CD14-positive monocyte (primary cell): ENCODE measurements at regions of chr17 and their contacts with region 1.

Region 1: DNA sequence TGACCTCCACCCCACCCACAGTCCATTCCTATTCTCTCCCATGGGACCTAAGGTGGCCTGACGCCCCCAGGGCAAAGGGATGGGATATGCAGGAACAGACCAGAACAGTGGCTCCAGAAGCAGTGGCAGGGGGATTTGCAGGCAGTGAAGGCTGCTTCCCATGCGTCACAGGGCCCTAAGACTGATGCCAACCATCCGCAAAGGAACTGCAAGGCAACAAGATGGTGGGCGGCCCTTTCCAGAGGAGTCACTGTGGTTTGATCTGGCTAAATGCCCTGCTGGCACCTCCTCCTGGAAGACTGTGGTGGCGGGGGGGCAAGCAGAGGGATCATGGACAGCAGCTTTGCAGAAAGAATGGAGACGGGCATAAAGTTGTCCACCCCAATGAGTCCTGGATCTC is 4.4 kb upstream of the SLC39A11 start:
- DNase-seq: peak; percentile 60 to 86 (median 67)
- H3K4me3 ChIP-seq: peak overlapping the region in 1 of 3 experiments; percentile 37
- H3K4me3 Mint-ChIP-seq: peak overlapping the region; percentile 61 to 75
- H3K27ac ChIP-seq: peak overlapping the region; percentile 71 to 81
- H3K27ac Mint-ChIP-seq: peak overlapping the region; percentile 75 to 94 (median 87)
- H3K4me1 ChIP-seq: peaks cover 60 to 79% of the 10 kb centered on the region in 2 donors
- H3K4me1 Mint-ChIP-seq: peaks cover 74% of the 10 kb centered on the region
- H3K27me3 ChIP-seq: no peaks in the 10 kb centered on the region
- H3K27me3 Mint-ChIP-seq: peaks cover 0 to 8% (median 0%) of the 10 kb centered on the region in 3 donors
- CTCF ChIP-seq: no peak

Region 2: GRCh38 chr17:73118951-73119391 is 22.1 kb after region 1 on chr17:
- intact Hi-C with region 1: no loop called
- DNase-seq: no peak
- H3K4me3 ChIP-seq: no peak overlapping the region
- H3K4me3 Mint-ChIP-seq: no peak overlapping the region
- H3K27ac ChIP-seq: no peak overlapping the region
- H3K27ac Mint-ChIP-seq: no peak overlapping the region
- H3K4me1 ChIP-seq: no peaks in the 10 kb centered on the region
- H3K4me1 Mint-ChIP-seq: peaks cover 7% of the 10 kb centered on the region
- H3K27me3 ChIP-seq: no peaks in the 10 kb centered on the region
- H3K27me3 Mint-ChIP-seq: peaks cover 0 to 5% (median 3%) of the 10 kb centered on the region in 3 donors
- CTCF ChIP-seq: no peak

Region 3: DNA sequence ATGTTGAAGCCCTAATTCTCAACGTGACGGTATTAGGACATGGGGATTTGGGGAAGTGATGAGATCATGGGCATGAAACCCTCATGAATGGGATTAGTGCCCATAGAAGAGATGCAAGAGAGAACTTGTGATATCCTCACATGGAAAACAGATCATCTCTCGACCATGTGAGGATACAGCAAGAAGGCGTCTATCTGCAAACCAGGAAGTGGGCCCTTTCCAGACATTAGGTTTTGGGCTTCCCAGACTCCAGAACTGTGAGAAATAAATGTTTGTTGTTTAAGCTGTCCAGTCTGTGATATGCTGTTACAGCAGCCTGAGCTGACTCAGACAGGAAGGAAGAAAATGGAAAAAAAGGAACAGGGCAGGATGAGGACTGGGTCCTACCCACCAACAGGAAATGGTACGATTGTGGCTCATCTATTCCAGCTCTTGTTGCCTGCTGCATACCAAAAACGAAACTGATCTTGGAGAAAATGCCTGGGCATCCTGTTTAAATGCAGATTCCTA is 46.1 kb after region 1 on chr17:
- intact Hi-C with region 1: loop called in 1 of 2 experiments (anchors 5 kb)
- DNase-seq: peak; percentile 91 to 97 (median 97)
- H3K4me3 ChIP-seq: peak overlapping the region in 1 of 3 experiments; percentile 58
- H3K4me3 Mint-ChIP-seq: peak overlapping the region; percentile 4 to 74
- H3K27ac ChIP-seq: peak overlapping the region; percentile 75 to 96
- H3K27ac Mint-ChIP-seq: peak overlapping the region; percentile 93 to 99 (median 95)
- H3K4me1 ChIP-seq: peaks cover 45 to 64% of the 10 kb centered on the region in 2 donors
- H3K4me1 Mint-ChIP-seq: peaks cover 53% of the 10 kb centered on the region
- H3K27me3 ChIP-seq: no peaks in the 10 kb centered on the region
- H3K27me3 Mint-ChIP-seq: peaks cover 0 to 3% (median 2%) of the 10 kb centered on the region in 3 donors
- CTCF ChIP-seq: no peak